CD8-positive, alpha-beta T cell (primary cell): ENCODE measurements at regions of chr21 and their contacts with region 1.

Region 1: DNA sequence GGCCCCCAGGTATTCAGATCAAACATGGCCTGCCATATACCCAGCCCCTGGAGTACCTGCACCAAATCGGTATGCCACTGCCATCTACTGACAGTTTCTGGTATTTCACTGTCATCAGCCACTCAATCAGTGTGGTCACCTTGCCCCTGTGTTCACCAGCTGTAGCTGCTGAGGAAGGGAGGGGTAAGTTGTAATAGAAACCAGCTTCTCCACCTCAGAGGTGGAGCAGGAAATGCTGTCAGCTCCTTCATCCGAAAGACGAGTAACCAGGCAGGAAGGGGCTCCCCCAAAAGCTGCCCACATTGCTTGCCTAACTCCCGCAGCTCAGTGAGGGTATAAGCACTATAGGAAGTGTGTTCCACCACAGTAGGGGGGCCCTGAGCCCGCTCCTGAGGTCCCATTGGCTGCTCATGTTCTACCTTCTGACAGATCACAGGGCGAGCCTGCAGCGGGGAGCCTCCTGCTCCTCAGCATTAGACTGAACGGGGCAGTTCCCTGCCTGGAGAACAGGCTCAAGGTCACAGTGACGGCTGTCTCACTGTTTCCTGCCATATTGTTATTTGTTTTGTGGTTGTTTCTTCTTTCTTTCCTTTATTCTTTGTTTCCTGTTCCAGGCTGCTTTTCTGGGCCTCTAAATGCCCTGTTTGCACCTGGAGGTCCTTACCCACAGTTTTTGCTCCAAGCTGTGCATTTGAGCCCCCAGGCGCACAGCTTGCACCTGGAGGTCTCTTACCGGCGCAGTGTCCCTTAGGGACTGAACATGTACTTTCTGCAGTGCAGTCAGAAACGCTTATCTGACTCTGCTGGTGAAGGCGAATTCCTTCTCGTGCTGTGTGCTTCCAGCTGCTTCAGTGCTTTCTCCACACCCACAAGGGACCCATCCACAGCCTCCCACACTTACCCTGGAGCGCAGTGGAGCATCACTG is 1638.3 kb downstream of the MRPL39 start:
- DNase-seq: peak; percentile 38 to 92 (median 70)
- ATAC-seq: peak; percentile 89
- H3K4me3 ChIP-seq: peak overlapping the region in 1 of 2 experiments; percentile 1
- H3K4me3 Mint-ChIP-seq: peak overlapping the region; percentile 59
- H3K27ac ChIP-seq: peak overlapping the region; percentile 28 to 66
- H3K27ac Mint-ChIP-seq: peak overlapping the region; percentile 58
- H3K4me1 ChIP-seq: peaks cover 21% of the 10 kb centered on the region
- H3K4me1 Mint-ChIP-seq: peaks cover 20% of the 10 kb centered on the region
- H3K27me3 ChIP-seq: no peaks in the 10 kb centered on the region
- H3K27me3 Mint-ChIP-seq: no peaks in the 10 kb centered on the region
- CTCF ChIP-seq: peak; percentile 79

Region 2: DNA sequence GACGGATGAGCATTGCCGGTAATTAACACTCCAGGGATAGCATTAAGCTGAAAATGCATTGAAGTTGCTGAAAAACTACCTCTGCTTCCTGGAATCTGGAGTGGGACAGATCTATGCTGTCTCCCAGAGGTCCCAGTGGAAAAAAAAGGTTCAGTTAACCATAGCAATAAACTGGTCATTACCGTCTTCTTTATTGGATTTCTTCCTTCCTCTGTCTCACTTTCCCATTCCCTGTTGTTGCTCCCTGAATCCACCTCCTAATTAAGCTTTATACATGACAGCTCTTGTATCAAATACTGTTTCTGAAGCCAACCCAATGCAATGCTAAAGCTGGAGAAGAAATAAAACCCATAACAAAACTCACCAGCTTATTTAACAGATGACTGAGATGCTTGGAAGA is 1164.8 kb before region 1 on chr21:
- CTCF ChIA-PET with region 1: no interaction called
- POLR2A ChIA-PET with region 1: no interaction called
- intact Hi-C with region 1: loop called in 1 of 2 experiments (anchors 10 kb)
- DNase-seq: no peak
- ATAC-seq: no peak
- H3K4me3 ChIP-seq: no peak overlapping the region
- H3K4me3 Mint-ChIP-seq: no peak overlapping the region
- H3K27ac ChIP-seq: no peak overlapping the region
- H3K27ac Mint-ChIP-seq: no peak overlapping the region
- H3K4me1 ChIP-seq: no peaks in the 10 kb centered on the region
- H3K4me1 Mint-ChIP-seq: no peaks in the 10 kb centered on the region
- H3K27me3 ChIP-seq: no peaks in the 10 kb centered on the region
- H3K27me3 Mint-ChIP-seq: no peaks in the 10 kb centered on the region
- CTCF ChIP-seq: no peak

Region 3: GRCh38 chr21:23936224-23936623 is 32.8 kb before region 1 on chr21:
- CTCF ChIA-PET with region 1: interaction called, 6 read pairs
- POLR2A ChIA-PET with region 1: no interaction called
- intact Hi-C with region 1: loop called in 1 of 2 experiments (anchors 1 kb)
- DNase-seq: peak in 2 of 9 experiments; percentile 7 to 21
- ATAC-seq: no peak
- H3K4me3 ChIP-seq: no peak overlapping the region
- H3K4me3 Mint-ChIP-seq: no peak overlapping the region
- H3K27ac ChIP-seq: no peak overlapping the region
- H3K27ac Mint-ChIP-seq: no peak overlapping the region
- H3K4me1 ChIP-seq: no peaks in the 10 kb centered on the region
- H3K4me1 Mint-ChIP-seq: no peaks in the 10 kb centered on the region
- H3K27me3 ChIP-seq: no peaks in the 10 kb centered on the region
- H3K27me3 Mint-ChIP-seq: no peaks in the 10 kb centered on the region
- CTCF ChIP-seq: no peak

Region 4: DNA sequence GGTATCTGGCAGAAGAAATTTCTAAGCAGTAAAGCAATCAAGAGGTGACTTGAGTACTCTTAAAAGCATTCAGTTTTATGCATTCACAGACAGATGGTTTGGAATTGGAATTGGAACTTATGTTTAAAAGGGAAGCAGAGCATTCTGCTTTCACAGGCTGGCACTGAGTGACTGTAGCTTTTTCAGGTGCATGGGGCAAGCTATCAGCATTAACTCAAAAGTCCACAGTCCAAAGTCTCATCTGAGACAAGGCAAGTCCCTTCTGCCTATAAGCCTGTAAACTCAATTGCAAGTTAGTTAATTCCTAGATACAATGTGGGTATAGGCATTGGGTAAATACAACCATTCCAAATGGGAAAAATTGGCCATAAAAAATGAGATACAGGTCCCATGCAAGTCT is 18.0 kb after region 1 on chr21:
- CTCF ChIA-PET with region 1: interaction called, 4 read pairs
- POLR2A ChIA-PET with region 1: no interaction called
- intact Hi-C with region 1: loop called in 1 of 2 experiments (anchors 2 kb)
- DNase-seq: no peak
- ATAC-seq: no peak
- H3K4me3 ChIP-seq: no peak overlapping the region
- H3K4me3 Mint-ChIP-seq: no peak overlapping the region
- H3K27ac ChIP-seq: no peak overlapping the region
- H3K27ac Mint-ChIP-seq: no peak overlapping the region
- H3K4me1 ChIP-seq: no peaks in the 10 kb centered on the region
- H3K4me1 Mint-ChIP-seq: no peaks in the 10 kb centered on the region
- H3K27me3 ChIP-seq: no peaks in the 10 kb centered on the region
- H3K27me3 Mint-ChIP-seq: no peaks in the 10 kb centered on the region
- CTCF ChIP-seq: no peak